Activated naive CD4-positive, alpha-beta T cell treated with anti-CD3 and anti-CD28 coated beads, Interleukin-2, amount 10 ng/mL, durations not matched to agents 7 days and 5 days (primary cell): ENCODE measurements at regions of chr9 and their contacts with region 1.

Region 1: GRCh38 chr9:74952281-74953151 is at the start of gene C9orf40:
- DNase-seq: peak; percentile 94
- H3K4me3 Mint-ChIP-seq: peak within 1 kb of the TSS; percentile 98
- H3K27ac Mint-ChIP-seq: peak within 1 kb of the TSS; percentile 97
- H3K4me1 Mint-ChIP-seq: peaks cover 43% of the 10 kb centered on the region
- H3K27me3 Mint-ChIP-seq: no peaks in the 10 kb centered on the region

Region 2: DNA sequence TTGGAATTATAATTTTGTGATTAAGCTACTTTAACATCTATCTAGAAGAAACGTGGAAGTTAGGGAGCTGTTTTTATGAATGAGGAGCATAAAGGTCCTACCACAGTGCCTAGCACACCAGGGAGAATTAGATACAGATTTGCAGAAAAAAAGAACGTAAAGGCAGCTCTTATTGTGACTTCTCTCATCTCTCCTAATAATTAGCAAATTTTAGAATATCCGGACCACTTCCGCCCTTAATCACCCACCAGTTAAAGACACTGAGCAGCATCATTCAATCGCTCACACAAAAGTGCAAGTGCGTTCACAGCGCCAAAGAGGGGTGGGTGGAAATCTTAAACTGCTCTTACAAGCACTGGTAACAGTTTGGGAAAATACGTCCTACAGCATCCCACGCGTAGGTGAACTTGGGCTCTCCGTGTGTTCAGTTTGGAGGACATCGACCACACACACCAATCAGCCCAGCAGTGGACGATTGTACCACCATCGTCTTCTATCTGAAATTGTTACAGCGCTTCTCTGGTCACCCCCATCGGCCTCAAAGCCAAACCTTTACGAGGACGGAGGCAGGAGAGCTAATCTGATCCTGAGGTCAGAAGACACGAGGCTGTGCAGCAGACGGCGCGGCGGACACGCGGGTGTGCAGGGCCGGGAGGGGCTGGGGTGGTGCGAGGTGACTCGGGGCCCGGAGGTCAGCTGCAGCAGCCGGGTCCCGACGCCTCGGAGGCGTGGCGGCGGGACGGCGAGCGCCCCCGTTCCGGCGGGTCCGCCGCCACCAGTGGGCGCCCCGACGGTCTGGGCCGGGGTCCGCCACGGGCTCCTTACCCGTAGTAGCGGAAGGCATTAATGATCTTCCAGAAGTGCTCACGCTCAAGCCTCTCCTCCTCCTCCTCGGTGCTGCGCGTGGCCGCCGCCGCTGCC is 74.9 kb after region 1 on chr9:
- CTCF ChIA-PET with region 1: interaction called, 10 read pairs
- DNase-seq: peak; percentile 65
- H3K4me3 Mint-ChIP-seq: peak overlapping the region; percentile 94
- H3K27ac Mint-ChIP-seq: peak overlapping the region; percentile 97
- H3K4me1 Mint-ChIP-seq: peaks cover 50% of the 10 kb centered on the region
- H3K27me3 Mint-ChIP-seq: peaks cover 5% of the 10 kb centered on the region